ENCODE measurements at regions of chr3 and their contacts with region 1.

Region 1: GRCh38 chr3:40877631-40878463 is 321.5 kb upstream of the CTNNB1 start:
- DNase-seq: peak; percentile 24 to 95
- H3K4me3 ChIP-seq: peak overlapping the region in 1 of 2 donors; percentile 34
- H3K27ac ChIP-seq: peak overlapping the region; percentile 49 to 82
- H3K4me1 ChIP-seq: peaks cover 0 to 20% of the 10 kb centered on the region in 2 donors
- H3K27me3 ChIP-seq: no peaks in the 10 kb centered on the region
- CTCF ChIP-seq: no peak

Region 2: DNA sequence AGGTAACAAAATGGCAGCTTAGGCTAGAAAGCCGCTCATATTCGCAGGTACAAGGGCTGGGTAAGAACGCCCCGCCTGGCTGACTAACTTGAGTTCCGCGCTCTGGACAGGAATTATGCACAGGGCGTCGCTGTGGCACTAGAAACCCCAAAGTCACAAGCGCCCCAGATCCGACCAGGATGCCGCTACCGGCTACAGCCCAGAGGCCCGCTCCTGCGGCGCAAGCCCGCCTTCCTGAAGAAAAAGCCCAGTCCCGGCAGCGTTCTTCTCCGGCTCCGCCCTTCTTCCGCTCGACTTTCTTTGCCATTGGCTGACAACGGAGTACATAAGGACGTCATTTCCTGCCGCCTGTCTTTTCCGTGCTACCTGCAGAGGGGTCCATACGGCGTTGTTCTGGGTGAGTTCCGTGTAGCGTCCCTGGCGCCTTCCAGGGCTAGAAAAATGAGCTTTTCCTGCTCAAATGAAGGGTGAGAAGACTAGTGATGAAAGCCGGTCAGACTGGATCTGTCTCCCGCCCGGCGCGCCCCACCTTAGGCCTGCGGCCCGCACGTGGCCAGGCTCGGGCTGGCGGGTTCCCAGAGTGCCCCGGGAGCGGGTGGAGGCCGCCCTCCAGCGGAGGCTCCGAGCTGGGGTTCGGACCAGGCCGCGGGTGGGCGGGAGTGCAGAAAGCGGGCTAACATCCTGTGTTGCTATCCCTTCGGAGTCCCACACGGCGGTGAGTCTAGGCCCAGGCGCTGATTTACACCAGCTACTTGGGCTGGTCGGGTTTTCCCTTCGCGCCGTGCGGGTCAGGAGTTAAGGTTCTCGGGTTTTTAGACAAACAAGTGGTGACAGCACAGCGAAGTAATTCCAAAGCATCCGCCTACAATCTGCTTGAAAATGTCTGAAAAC is 1471.2 kb before region 1 on chr3 and contains the start of gene RPSA:
- intact Hi-C with region 1: loop called (anchors 5 kb)
- DNase-seq: peak; percentile 83 to 97
- H3K4me3 ChIP-seq: peak within 1 kb of the TSS; percentile 80 to 88
- H3K27ac ChIP-seq: peak within 1 kb of the TSS; percentile 78 to 79
- H3K4me1 ChIP-seq: peaks cover 0 to 17% of the 10 kb centered on the region in 2 donors
- H3K27me3 ChIP-seq: no peaks in the 10 kb centered on the region
- CTCF ChIP-seq: peak in 2 of 3 experiments; percentile 3 to 47
- total RNA-seq, gene RPSA: 745 TPM

Region 3: DNA sequence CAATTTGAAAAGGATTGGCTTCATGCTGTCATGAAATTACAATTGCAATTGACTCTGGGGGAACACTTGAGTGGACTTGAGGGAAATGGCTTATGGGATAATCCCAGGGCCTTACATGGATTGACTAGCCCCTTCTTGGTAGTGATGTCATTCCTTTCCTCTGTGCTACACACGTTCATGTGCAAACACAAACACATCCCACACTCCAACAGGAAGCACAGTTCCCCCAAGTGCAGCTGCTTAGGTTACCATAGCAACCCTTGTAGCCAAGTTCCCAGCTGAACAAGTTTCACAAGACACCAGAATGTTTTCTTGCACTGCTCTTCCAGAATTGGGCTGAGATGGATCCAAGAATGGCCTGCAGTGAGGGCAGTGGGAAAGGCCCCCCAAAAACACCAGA is 136.1 kb before region 1 on chr3:
- intact Hi-C with region 1: no loop called
- DNase-seq: no peak
- H3K4me3 ChIP-seq: no peak overlapping the region
- H3K27ac ChIP-seq: no peak overlapping the region
- H3K4me1 ChIP-seq: no peaks in the 10 kb centered on the region
- H3K27me3 ChIP-seq: no peaks in the 10 kb centered on the region
- CTCF ChIP-seq: no peak

Region 4: GRCh38 chr3:40765884-40766283 is 112.0 kb before region 1 on chr3:
- intact Hi-C with region 1: loop called (anchors 2 kb)
- DNase-seq: peak in 1 of 2 donors; percentile 71
- H3K4me3 ChIP-seq: peak overlapping the region in 1 of 2 donors; percentile 31
- H3K27ac ChIP-seq: peak overlapping the region; percentile 15 to 21
- H3K4me1 ChIP-seq: peaks cover 2 to 19% of the 10 kb centered on the region in 2 donors
- H3K27me3 ChIP-seq: no peaks in the 10 kb centered on the region
- CTCF ChIP-seq: no peak

Region 5: DNA sequence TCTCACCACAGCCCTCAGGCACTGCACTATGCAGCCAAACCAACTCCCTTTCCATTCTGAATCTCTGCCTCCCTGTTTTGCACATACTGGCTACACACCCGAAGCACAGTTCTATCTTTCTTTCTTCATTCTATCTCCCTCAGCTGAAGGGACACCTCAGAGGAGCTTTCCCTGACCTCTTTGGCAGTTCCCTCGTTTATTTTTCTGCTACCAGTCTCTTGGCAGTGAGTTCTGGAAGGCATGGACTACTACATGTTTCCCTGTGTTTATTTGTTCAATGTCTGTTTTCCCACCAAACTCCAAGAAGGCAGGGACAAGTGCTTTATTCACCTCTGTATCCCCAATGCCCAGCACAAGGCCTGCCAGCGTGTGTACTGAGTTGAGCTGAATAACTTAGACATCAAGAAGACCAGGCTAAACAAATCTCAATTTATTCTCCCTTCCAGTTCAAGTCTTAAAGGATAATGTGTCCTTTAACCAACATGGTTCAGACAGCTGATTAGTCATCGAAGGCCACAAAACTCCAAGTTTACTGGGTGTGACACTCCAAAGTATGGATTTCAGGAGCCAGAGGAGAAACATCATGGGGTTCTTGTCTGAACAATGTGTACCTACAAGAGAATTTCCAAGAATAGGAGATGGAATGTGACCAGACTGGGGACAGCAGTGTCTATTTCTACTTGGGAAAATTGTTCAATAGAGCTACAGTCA is 61.3 kb after region 1 on chr3:
- intact Hi-C with region 1: loop called (anchors 5 kb)
- DNase-seq: no peak
- H3K4me3 ChIP-seq: no peak overlapping the region
- H3K27ac ChIP-seq: peak overlapping the region; percentile 55 to 60
- H3K4me1 ChIP-seq: peaks cover 0 to 13% of the 10 kb centered on the region in 2 donors
- H3K27me3 ChIP-seq: no peaks in the 10 kb centered on the region
- CTCF ChIP-seq: no peak

Region 6: GRCh38 chr3:41198950-41199865 is 321.4 kb after region 1 on chr3 and contains the start of gene CTNNB1:
- intact Hi-C with region 1: loop called (anchors 1 kb)
- DNase-seq: peak; percentile 74 to 96
- H3K4me3 ChIP-seq: peak within 1 kb of the TSS; percentile 100
- H3K27ac ChIP-seq: peak within 1 kb of the TSS; percentile 98 to 100
- H3K4me1 ChIP-seq: peaks cover 0 to 29% of the 10 kb centered on the region in 2 donors
- H3K27me3 ChIP-seq: no peaks in the 10 kb centered on the region
- CTCF ChIP-seq: no peak
- total RNA-seq, gene CTNNB1: 371 TPM

Measured in ascending aorta (tissue), 2 donors.